Psoas muscle (tissue), 8 donors: ENCODE measurements at regions of chr18 and their contacts with region 1.

Region 1: DNA sequence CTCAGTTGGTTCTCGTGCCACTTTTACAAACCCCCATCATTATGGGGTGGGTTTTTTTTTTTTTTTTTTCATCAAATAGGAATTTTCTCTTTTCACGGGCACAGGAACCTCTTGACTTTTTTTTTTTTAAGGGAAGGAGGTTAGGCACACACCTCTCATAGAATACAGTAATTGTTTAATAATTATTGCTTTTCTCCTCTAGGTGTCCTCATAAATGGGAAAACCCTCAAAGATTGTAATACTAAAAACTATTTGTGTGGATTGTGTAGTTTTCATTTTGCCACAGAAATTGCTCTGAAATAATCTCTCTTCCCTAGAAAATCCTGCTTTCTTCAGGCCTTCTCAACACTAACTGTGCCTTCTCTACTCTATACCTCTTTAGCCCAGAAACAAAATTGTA is 147.3 kb downstream of the GREB1L start:
- DNase-seq: no peak
- ATAC-seq: no peak
- H3K4me3 ChIP-seq: no peak overlapping the region
- H3K27ac ChIP-seq: no peak overlapping the region
- H3K4me1 ChIP-seq: no peaks in the 10 kb centered on the region
- H3K27me3 ChIP-seq: no peaks in the 10 kb centered on the region
- CTCF ChIP-seq: no peak

Region 2: GRCh38 chr18:21298351-21298750 is 90.9 kb before region 1 on chr18:
- intact Hi-C with region 1: loop called in 1 of 2 experiments (anchors 10 kb)
- DNase-seq: no peak
- ATAC-seq: no peak
- H3K4me3 ChIP-seq: no peak overlapping the region
- H3K27ac ChIP-seq: no peak overlapping the region
- H3K4me1 ChIP-seq: no peaks in the 10 kb centered on the region
- H3K27me3 ChIP-seq: peaks cover 0 to 3% (median 0%) of the 10 kb centered on the region in 3 donors
- CTCF ChIP-seq: no peak

Region 3: GRCh38 chr18:21330122-21330701 is 59.1 kb before region 1 on chr18:
- intact Hi-C with region 1: no loop called
- DNase-seq: peak in 1 of 2 donors; percentile 15
- ATAC-seq: peak in 3 of 4 donors; percentile 49 to 79 (median 63)
- H3K4me3 ChIP-seq: no peak overlapping the region
- H3K27ac ChIP-seq: no peak overlapping the region
- H3K4me1 ChIP-seq: no peaks in the 10 kb centered on the region
- H3K27me3 ChIP-seq: no peaks in the 10 kb centered on the region
- CTCF ChIP-seq: no peak